HEK293T (cell line): ENCODE measurements at regions of chr1 and their contacts with region 1.

Region 1: DNA sequence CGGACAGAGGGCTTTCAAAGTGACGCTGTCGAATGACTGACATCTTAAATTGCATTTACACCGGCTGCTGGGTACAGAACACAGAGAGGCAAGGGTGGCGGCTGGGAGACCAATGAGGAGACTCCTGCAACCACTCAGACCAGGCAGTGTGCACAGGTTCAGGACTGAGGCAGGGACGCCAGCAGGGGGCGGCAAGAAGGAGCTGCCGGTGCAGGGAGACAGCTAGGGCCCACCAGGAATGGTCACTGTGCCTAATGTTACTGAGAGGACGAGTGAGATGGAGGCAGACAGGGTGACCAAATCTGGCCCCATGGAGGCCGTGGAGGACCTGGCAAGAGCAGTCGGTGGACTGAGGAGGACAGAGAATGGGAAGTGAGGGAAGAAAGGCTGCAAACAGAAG is 23.5 kb downstream of the GLIS1 start:
- DNase-seq: peak; percentile 77

Region 2: GRCh38 chr1:53620061-53620855 is 95.2 kb before region 1 on chr1:
- CTCF ChIA-PET with region 1: no interaction called
- POLR2A ChIA-PET with region 1: no interaction called
- DNase-seq: no peak

Region 3: DNA sequence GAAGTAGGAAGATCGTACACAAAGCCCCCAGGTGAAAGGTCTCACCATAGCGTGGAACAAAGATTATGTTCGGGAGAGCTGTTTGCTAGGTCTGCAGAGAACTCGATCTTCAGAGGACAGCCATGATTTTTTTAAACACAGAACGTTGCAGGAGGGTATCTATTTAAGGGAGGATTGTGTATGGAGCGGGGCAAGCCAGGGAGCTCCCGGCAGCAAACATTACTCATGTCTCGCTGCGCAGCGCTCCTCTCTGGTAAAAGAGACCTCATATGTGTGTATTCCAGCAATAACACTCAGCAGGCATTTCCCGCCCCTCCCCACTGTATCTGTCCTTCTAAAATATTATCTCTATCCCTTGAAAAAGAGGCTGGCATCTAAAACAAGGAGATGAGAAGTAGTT is 20.8 kb after region 1 on chr1:
- CTCF ChIA-PET with region 1: interaction called, 13 read pairs
- POLR2A ChIA-PET with region 1: interaction called, 5 read pairs
- DNase-seq: no peak

Region 4: DNA sequence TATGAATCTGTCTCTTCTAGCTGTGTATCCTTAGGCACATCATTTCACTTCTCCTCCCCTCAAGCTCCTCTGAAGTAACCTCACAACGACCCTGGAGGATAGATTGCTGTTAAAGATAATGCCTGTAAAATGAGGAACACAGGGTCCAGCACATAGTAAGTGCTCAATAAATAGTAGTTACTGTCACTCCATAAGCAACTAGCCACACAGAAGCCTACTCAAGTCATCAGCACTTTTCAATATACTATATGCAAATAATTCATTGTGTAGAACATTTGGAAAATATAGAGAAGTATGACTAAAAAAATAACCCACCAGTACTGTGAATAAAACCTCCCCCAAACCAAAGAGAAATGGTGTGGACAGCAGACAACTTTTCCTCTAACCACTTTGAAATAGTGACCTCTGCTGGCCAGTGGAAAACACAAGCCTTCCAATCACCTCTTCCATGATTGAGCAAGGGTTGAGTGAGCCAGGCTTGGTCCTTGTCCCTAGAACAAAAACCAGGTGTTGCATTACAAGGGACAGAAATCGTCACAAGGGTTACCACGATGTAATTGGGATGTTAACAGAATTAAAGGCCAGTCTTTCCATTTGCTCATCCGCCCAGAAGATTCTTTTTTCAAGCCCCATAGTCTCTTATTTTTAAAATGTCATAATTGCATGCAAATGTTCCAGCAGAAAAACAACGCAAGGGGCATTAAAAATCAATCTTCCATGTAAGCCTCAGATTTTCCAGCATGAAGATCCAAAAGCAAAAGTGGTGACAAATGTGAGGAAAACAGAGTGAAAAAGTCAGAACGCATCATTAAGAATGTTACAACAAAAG is 39.2 kb after region 1 on chr1:
- CTCF ChIA-PET with region 1: interaction called, 19 read pairs
- POLR2A ChIA-PET with region 1: interaction called, 3 read pairs
- DNase-seq: peak; percentile 67